ENCODE measurements at regions of chr12 and their contacts with region 1.

Region 1: DNA sequence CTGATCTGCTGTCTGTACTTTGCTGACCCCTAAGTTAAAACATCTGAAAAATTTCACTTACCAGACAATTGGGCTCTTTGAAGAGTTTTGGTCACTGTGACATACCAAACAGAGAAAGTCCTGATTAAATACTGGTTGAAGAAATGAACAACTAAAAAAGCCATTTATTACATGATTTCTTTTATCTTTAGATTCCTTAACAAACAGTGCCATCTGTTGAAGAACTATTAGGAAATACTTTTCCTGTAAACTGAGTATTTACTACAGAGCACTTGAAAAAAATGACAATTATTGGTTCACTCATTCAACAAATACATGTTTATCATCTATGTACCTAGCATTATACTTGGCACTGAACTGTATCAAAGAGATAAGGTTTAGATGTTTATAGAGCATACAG is 6.5 kb upstream of the WASHC4 start:
- DNase-seq: no peak
- H3K4me3 Mint-ChIP-seq: no peak overlapping the region
- H3K27ac Mint-ChIP-seq: no peak overlapping the region
- H3K4me1 Mint-ChIP-seq: peaks cover 9% of the 10 kb centered on the region
- H3K27me3 Mint-ChIP-seq: no peaks in the 10 kb centered on the region
- CTCF ChIP-seq: no peak

Region 2: GRCh38 chr12:104671407-104672098 is 429.4 kb before region 1 on chr12:
- CTCF ChIA-PET with region 1: no interaction called
- intact Hi-C with region 1: loop called (anchors 5 kb)
- DNase-seq: peak; percentile 99
- H3K4me3 Mint-ChIP-seq: peak overlapping the region; percentile 48
- H3K27ac Mint-ChIP-seq: peak overlapping the region; percentile 90
- H3K4me1 Mint-ChIP-seq: peaks cover 52% of the 10 kb centered on the region
- H3K27me3 Mint-ChIP-seq: peaks cover 15% of the 10 kb centered on the region
- CTCF ChIP-seq: no peak

Region 3: GRCh38 chr12:105705765-105706164 is 604.8 kb after region 1 on chr12:
- CTCF ChIA-PET with region 1: no interaction called
- intact Hi-C with region 1: no loop called
- DNase-seq: peak; percentile 55
- H3K4me3 Mint-ChIP-seq: no peak overlapping the region
- H3K27ac Mint-ChIP-seq: no peak overlapping the region
- H3K4me1 Mint-ChIP-seq: no peaks in the 10 kb centered on the region
- H3K27me3 Mint-ChIP-seq: peaks cover 20% of the 10 kb centered on the region
- CTCF ChIP-seq: peak; percentile 71